Activated CD8-positive, alpha-beta T cell treated with anti-CD3 and anti-CD28 coated beads for 36 hours (primary cell): ENCODE measurements at regions of chr3 and their contacts with region 1.

Region 1: DNA sequence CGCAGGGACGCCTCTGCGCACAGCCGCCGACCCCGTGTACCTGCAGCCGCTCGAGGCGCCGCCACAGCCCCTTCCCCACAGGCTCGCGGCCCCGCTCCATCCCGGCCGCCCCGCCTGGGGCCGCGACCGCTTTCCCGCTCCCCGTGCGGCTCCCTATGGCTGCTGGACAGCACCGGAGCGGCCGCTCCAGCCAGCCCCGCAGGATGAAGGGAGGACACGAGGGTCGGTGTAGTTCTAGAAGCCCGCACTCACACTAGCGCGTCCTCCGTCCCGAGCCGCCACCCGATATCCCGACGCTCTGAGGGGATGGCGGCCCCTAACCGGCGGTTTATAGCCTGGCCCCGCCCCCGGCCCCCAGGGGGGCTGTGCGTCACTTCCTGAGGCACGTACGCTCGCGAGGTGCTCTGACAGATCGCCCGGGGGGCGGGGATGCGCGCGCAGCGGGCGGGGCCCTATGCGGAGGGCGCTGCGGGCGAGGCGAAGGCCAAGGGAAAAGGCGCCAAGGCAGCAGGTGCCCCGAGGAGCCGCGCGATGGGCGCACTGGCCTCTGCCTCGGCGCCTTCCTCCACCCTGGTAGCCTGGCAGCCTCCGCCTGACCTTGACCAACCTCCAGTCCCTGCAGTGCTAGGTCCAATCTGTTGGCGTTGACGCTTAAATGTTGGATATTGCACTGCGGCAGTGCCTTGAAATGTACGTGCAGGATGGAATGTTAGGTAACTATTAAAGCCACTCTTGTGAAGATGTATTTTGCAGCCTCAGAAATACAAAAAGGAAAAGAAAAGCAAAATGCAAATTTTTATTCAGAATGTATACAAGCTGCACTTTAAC is at the start of gene TFRC:
- DNase-seq: peak; percentile 98
- ATAC-seq: peak; percentile 95
- H3K4me3 Mint-ChIP-seq: peak within 1 kb of the TSS; percentile 91
- H3K27ac Mint-ChIP-seq: peak within 1 kb of the TSS; percentile 96
- H3K4me1 Mint-ChIP-seq: peaks cover 28% of the 10 kb centered on the region
- H3K27me3 Mint-ChIP-seq: no peaks in the 10 kb centered on the region
- CTCF ChIP-seq: no peak
- total RNA-seq, gene TFRC: 521 to 524 TPM

Region 2: GRCh38 chr3:196063456-196063855 is 18.5 kb before region 1 on chr3:
- CTCF ChIA-PET with region 1: interaction called, 3 read pairs
- POLR2A ChIA-PET with region 1: interaction called, 19 read pairs
- intact Hi-C with region 1: no loop called
- DNase-seq: no peak
- ATAC-seq: no peak
- H3K4me3 Mint-ChIP-seq: no peak overlapping the region
- H3K27ac Mint-ChIP-seq: peak overlapping the region; percentile 75
- H3K4me1 Mint-ChIP-seq: peaks cover 9% of the 10 kb centered on the region
- H3K27me3 Mint-ChIP-seq: no peaks in the 10 kb centered on the region
- CTCF ChIP-seq: no peak

Region 3: GRCh38 chr3:196179380-196180308 is 97.6 kb after region 1 on chr3:
- CTCF ChIA-PET with region 1: interaction called, 296 read pairs
- POLR2A ChIA-PET with region 1: interaction called, 14 read pairs
- intact Hi-C with region 1: loop called (anchors 5 kb)
- DNase-seq: peak; percentile 98
- ATAC-seq: peak; percentile 85
- H3K4me3 Mint-ChIP-seq: peak overlapping the region; percentile 61
- H3K27ac Mint-ChIP-seq: peak overlapping the region; percentile 100
- H3K4me1 Mint-ChIP-seq: peaks cover 52% of the 10 kb centered on the region
- H3K27me3 Mint-ChIP-seq: no peaks in the 10 kb centered on the region
- CTCF ChIP-seq: no peak

Region 4: GRCh38 chr3:196186651-196187573 is 104.9 kb after region 1 on chr3:
- CTCF ChIA-PET with region 1: interaction called, 296 read pairs
- POLR2A ChIA-PET with region 1: interaction called, 10 read pairs
- intact Hi-C with region 1: loop called (anchors 5 kb)
- DNase-seq: peak; percentile 40
- ATAC-seq: no peak
- H3K4me3 Mint-ChIP-seq: peak overlapping the region; percentile 26
- H3K27ac Mint-ChIP-seq: peak overlapping the region; percentile 77
- H3K4me1 Mint-ChIP-seq: peaks cover 35% of the 10 kb centered on the region
- H3K27me3 Mint-ChIP-seq: no peaks in the 10 kb centered on the region
- CTCF ChIP-seq: no peak